Calu3 (cell line): ENCODE measurements at regions of chr5 and their contacts with region 1.

Region 1: GRCh38 chr5:146541958-146542849 is 26.2 kb upstream of the GPR151 start:
- DNase-seq: peak; percentile 94
- H3K4me3 Mint-ChIP-seq: no peak overlapping the region
- H3K27ac Mint-ChIP-seq: no peak overlapping the region
- H3K4me1 Mint-ChIP-seq: peaks cover 20% of the 10 kb centered on the region
- H3K27me3 Mint-ChIP-seq: no peaks in the 10 kb centered on the region
- CTCF ChIP-seq: peak; percentile 97

Region 2: GRCh38 chr5:146622391-146622790 is 80.2 kb after region 1 on chr5:
- CTCF ChIA-PET with region 1: interaction called, 6 read pairs
- intact Hi-C with region 1: loop called (anchors 1 kb)
- DNase-seq: no peak
- H3K4me3 Mint-ChIP-seq: no peak overlapping the region
- H3K27ac Mint-ChIP-seq: no peak overlapping the region
- H3K4me1 Mint-ChIP-seq: no peaks in the 10 kb centered on the region
- H3K27me3 Mint-ChIP-seq: peaks cover 33% of the 10 kb centered on the region
- CTCF ChIP-seq: peak; percentile 66

Region 3: DNA sequence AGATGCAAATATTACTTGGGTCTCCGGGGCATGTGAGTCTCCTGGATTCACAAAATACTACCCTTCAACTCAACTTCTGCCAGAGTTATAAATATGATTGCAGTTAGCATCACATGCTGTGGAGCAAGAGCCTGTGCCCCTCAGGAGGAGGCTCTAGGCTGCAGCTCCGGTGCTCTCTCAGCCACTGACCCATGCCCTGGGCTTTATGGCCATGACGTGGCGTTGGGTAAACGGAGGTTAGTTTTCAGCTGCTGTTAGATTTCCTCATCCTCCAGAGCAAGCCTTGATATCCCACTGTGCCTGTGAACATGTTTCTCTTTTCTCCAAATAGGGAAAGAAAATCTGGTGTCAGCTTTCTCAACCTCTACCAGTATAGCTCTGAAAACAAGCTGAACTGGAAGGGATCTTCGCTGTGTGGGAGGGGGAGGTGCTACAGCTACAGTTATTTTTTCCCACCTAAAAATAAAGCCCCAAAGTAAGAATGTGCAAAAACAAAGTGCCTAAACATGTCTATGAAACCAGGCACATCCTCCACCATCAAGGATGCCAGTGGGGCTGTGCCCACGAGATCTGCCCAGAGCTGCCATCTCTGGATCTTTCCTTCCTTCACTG is 98.2 kb after region 1 on chr5:
- CTCF ChIA-PET with region 1: no interaction called
- intact Hi-C with region 1: loop called (anchors 5 kb)
- DNase-seq: no peak
- H3K4me3 Mint-ChIP-seq: no peak overlapping the region
- H3K27ac Mint-ChIP-seq: no peak overlapping the region
- H3K4me1 Mint-ChIP-seq: no peaks in the 10 kb centered on the region
- H3K27me3 Mint-ChIP-seq: peaks cover 42% of the 10 kb centered on the region
- CTCF ChIP-seq: no peak

Region 4: DNA sequence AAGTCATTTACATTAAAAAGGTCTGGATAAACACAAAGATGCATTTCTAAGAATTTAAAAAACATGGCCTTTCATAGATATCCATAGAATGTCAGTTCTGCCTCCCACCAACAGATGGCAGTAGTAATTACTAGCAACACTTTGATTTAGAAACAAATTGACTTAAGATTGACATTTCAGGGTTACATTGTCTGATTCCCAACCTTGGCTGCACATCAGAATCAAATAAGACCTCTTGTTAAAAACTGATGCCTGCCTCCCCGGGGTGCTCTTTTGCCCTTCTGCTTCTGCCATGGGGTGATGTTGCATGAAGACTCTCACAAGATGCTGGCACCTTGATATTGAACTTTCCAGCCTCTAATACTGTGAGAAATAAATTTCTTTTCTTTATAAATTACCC is 120.0 kb after region 1 on chr5:
- CTCF ChIA-PET with region 1: no interaction called
- intact Hi-C with region 1: loop called (anchors 5 kb)
- DNase-seq: peak; percentile 28
- H3K4me3 Mint-ChIP-seq: no peak overlapping the region
- H3K27ac Mint-ChIP-seq: no peak overlapping the region
- H3K4me1 Mint-ChIP-seq: no peaks in the 10 kb centered on the region
- H3K27me3 Mint-ChIP-seq: peaks cover 16% of the 10 kb centered on the region
- CTCF ChIP-seq: peak; percentile 50